ENCODE measurements at regions of chr13 and their contacts with region 1.

Region 1: GRCh38 chr13:113897161-113897560 is 33.3 kb upstream of the GAS6 start:
- DNase-seq: peak; percentile 88 to 94
- H3K4me3 ChIP-seq: no peak overlapping the region
- H3K27ac ChIP-seq: peak overlapping the region; percentile 71
- H3K4me1 ChIP-seq: peaks cover 29% of the 10 kb centered on the region
- H3K27me3 ChIP-seq: no peaks in the 10 kb centered on the region
- CTCF ChIP-seq: no peak

Region 2: DNA sequence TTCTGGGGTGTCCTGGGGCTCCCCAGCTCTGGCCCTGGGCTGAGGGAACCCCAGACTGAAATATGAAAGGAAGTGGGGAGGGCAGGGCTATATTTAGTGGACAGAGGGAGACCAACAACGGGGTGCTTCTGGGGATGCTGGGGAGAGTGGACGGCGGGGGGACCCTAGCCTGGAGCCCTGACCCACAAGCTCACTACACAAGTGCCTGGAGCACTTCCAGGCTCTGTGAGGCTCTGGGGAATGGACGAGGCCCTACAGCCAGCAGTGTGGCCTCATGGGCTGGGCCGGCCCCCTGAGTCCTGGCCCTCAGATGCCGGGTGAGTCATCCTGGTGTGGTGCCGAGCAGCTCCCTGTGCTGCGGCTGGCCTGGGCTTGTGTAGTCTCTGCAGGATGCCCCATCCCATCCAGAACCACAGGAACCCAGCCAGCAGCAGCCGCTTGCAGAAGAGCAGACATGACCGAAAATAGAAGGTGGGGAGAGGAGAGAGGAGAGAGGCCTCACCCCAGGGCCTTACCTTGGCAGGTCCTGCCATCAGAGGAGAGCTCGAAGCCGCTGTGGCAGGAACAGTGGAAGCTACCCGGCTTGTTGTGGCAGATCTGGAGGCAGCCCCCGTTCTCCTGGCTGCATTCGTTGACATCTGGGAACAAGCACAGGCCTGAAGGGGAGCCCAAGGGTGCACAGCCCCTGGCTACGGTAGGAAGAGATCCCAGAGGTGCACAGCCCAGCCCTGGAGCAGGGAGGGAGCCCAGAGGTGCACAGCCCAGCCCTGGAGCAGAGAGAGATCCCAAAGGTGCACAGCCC is 59.4 kb before region 1 on chr13:
- CTCF ChIA-PET with region 1: no interaction called
- POLR2A ChIA-PET with region 1: no interaction called
- intact Hi-C with region 1: loop called (anchors 2 kb)
- DNase-seq: peak; percentile 73 to 90
- H3K4me3 ChIP-seq: no peak overlapping the region
- H3K27ac ChIP-seq: no peak overlapping the region
- H3K4me1 ChIP-seq: peaks cover 33% of the 10 kb centered on the region
- H3K27me3 ChIP-seq: no peaks in the 10 kb centered on the region
- CTCF ChIP-seq: no peak

Region 3: GRCh38 chr13:113863436-113864272 is 33.5 kb before region 1 on chr13 and contains the start of gene GAS6:
- CTCF ChIA-PET with region 1: no interaction called
- POLR2A ChIA-PET with region 1: no interaction called
- intact Hi-C with region 1: loop called (anchors 2 kb)
- DNase-seq: peak in 1 of 2 experiments; percentile 60
- H3K4me3 ChIP-seq: peak within 1 kb of the TSS; percentile 57
- H3K27ac ChIP-seq: no peak within 1 kb of the TSS
- H3K4me1 ChIP-seq: peaks cover 13% of the 10 kb centered on the region; the same call in 1 of the 2 replicates
- H3K27me3 ChIP-seq: peaks cover 10% of the 10 kb centered on the region; the same call in 1 of the 2 replicates
- CTCF ChIP-seq: no peak; the same call in 1 of the 2 replicates
- total RNA-seq, gene GAS6: 92.9 and 93.8 TPM in 2 replicates

Region 4: GRCh38 chr13:113928685-113929627 is 31.8 kb after region 1 on chr13:
- CTCF ChIA-PET with region 1: no interaction called
- POLR2A ChIA-PET with region 1: no interaction called
- intact Hi-C with region 1: loop called (anchors 2 kb)
- DNase-seq: no peak
- H3K4me3 ChIP-seq: no peak overlapping the region
- H3K27ac ChIP-seq: no peak overlapping the region
- H3K4me1 ChIP-seq: peaks cover 12% of the 10 kb centered on the region
- H3K27me3 ChIP-seq: peaks cover 39% of the 10 kb centered on the region
- CTCF ChIP-seq: no peak

Region 5: DNA sequence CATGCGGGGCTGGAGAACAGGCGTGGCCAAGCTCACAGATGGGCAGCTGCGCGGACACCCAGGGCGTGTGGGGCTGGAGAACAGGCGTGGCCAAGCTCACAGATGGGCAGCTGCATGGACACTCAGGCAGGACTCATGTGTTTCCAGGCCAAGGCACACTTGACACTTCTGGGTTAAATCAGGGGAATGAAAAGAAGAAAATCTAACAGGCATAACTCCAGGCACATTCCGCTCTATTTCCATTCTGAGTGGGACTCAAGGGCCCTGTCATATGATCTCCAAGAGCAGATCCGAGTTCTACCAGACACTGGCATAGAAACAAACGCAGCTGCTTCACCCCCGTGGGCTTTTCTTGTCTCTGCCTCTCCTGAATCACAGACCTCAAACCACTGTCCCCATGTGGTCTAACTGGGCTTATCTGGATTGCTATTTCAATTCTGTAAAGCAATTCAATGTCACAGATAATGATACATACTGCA is 94.1 kb after region 1 on chr13:
- CTCF ChIA-PET with region 1: no interaction called
- POLR2A ChIA-PET with region 1: no interaction called
- intact Hi-C with region 1: no loop called
- DNase-seq: no peak
- H3K4me3 ChIP-seq: no peak overlapping the region
- H3K27ac ChIP-seq: no peak overlapping the region
- H3K4me1 ChIP-seq: peaks cover 1% of the 10 kb centered on the region
- H3K27me3 ChIP-seq: no peaks in the 10 kb centered on the region
- CTCF ChIP-seq: no peak

Region 6: DNA sequence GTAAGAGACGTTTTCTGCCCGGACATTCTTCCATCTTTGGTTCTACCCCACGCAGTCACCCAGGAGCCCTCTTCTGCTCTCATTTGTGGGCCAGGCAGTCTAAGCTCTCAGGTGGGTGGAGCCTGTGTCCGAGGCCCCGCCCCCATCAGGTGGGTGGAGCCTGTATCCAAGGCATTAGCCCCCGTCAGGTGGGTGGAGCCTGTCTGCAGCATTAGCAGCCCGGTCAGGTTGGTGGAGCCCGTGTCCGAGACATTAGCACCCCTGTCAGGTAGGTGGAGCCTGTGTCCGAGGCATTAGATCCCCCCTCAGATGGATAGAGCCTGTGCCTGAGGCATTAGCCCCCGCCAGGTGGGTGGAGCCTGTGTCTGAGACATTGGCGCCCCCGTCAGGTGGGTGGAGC is 122.2 kb after region 1 on chr13:
- CTCF ChIA-PET with region 1: no interaction called
- POLR2A ChIA-PET with region 1: no interaction called
- intact Hi-C with region 1: no loop called
- DNase-seq: no peak
- H3K4me3 ChIP-seq: no peak overlapping the region
- H3K27ac ChIP-seq: no peak overlapping the region
- H3K4me1 ChIP-seq: 0 out of 2 replicates have a peak, but pooled peaks cover 13% of the 10 kb centered on the region
- H3K27me3 ChIP-seq: no peaks in the 10 kb centered on the region
- CTCF ChIP-seq: no peak

Measured in PC-9 (cell line).